ENCODE measurements at regions of chr4 and their contacts with region 1.

Region 1: GRCh38 chr4:2468445-2469192 is at the start of gene RNF4:
- DNase-seq: peak; percentile 94
- H3K4me3 Mint-ChIP-seq: peak within 1 kb of the TSS; percentile 95
- H3K27ac Mint-ChIP-seq: peak within 1 kb of the TSS; percentile 96
- H3K4me1 Mint-ChIP-seq: peaks cover 29% of the 10 kb centered on the region
- H3K27me3 Mint-ChIP-seq: peaks cover 1% of the 10 kb centered on the region
- total RNA-seq, gene RNF4: 93.7 and 112 TPM in 2 replicates

Region 2: DNA sequence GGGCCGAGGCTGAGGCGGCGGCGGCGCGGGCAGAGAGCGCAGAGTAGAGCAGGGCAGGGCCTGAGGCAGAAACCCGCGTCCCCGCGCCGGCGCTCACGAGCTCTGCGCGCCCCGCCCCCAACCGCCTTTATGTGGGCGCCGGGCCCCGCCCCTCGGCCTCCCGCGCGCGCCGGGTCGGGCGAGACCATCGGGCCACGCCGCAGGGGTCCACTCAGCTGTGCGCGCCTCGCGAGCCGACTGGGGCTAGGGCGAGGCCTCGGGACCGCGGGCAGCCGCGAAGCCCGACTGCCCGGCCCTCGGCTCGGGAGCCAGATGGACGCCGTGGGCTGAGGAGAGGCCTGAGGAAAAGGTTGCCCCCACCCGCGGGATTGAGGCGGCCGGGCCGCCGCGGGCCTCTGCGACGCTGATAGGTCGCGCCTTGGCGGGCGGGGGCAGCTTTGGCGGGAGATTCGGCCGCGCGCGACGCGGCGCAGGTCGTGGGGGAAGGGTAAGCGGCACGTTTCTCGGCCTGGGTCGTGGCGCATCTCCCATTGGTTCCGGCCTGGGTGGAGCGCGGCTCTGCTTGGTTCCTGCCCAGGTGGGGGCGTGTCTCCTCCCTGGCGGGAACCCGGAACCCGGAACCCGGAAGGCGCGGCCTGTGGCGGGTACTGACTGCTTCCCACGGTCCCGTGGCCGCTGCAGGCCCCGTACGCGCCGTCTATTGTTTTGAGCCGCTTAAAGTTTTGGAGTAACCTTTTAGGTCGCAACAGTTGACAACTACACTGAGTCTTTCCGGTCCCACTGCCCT is 756.2 kb before region 1 on chr4 and contains the start of gene SLBP:
- intact Hi-C with region 1: loop called (anchors 2 kb)
- DNase-seq: peak; percentile 99
- H3K4me3 Mint-ChIP-seq: peak within 1 kb of the TSS; percentile 99
- H3K27ac Mint-ChIP-seq: peak within 1 kb of the TSS; percentile 89
- H3K4me1 Mint-ChIP-seq: peaks cover 59% of the 10 kb centered on the region
- H3K27me3 Mint-ChIP-seq: no peaks in the 10 kb centered on the region
- total RNA-seq, gene SLBP: 136 and 140 TPM in 2 replicates

Region 3: GRCh38 chr4:2008875-2009703 is 459.5 kb before region 1 on chr4 and contains the start of gene NELFA:
- intact Hi-C with region 1: loop called (anchors 2 kb)
- DNase-seq: peak; percentile 91
- H3K4me3 Mint-ChIP-seq: peak within 1 kb of the TSS; percentile 92
- H3K27ac Mint-ChIP-seq: peak within 1 kb of the TSS; percentile 88
- H3K4me1 Mint-ChIP-seq: peaks cover 31% of the 10 kb centered on the region
- H3K27me3 Mint-ChIP-seq: peaks cover 18% of the 10 kb centered on the region
- total RNA-seq, gene NELFA: 52.9 and 55.4 TPM in 2 replicates

Region 4: DNA sequence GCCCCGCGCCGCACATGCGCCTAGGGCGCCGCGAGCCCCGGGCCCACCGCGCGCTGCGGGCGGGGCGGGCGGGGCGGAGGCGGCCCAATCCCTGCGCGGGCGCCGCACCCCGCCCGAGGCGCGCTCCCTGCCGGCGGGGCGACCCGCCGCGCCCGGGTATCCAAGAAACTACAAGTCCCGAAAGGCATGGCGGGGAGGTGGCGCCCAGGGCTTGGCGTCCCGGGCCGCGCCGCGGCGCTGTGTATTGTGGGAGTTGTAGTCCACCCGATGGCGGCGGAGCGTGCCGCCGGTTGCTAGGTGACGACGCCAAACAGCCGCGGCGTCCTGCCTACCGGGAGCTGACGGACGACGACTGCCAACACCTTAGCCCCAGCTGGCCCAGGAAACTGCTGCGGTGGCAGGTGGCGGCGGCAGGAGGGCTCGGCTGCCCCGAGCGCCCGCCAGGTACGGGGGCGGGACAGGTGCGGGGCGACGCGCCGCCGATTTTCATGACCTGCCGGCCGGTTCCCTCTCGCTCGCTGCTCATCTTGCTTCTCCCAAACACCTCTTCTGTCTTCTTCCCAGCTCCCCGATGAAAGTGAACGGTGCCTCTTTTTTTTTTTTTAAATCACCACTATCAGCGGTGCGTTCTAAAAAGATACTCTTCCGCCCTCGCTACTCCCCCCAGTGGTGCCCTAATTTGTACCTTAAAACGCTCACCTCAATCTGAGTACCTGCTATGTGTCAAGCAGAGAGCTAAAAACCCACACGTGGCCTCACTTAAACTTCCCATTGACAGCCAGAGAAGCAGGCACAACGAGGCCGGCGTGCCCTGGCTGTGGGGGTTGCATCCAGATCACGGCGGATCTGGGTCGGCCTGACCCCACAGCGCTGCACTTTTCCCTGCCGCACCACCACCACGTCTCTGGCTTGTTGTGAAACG is 49.7 kb before region 1 on chr4 and contains the start of gene CFAP99:
- intact Hi-C with region 1: loop called (anchors 1 kb)
- DNase-seq: peak; percentile 94
- H3K4me3 Mint-ChIP-seq: peak within 1 kb of the TSS; percentile 85
- H3K27ac Mint-ChIP-seq: peak within 1 kb of the TSS; percentile 82
- H3K4me1 Mint-ChIP-seq: peaks cover 39% of the 10 kb centered on the region
- H3K27me3 Mint-ChIP-seq: peaks cover 55% of the 10 kb centered on the region
- total RNA-seq, gene CFAP99: not detected in 2 replicates

Region 5: GRCh38 chr4:2457481-2458295 is 10.9 kb before region 1 on chr4:
- intact Hi-C with region 1: no loop called
- DNase-seq: no peak
- H3K4me3 Mint-ChIP-seq: no peak overlapping the region
- H3K27ac Mint-ChIP-seq: no peak overlapping the region
- H3K4me1 Mint-ChIP-seq: peaks cover 4% of the 10 kb centered on the region
- H3K27me3 Mint-ChIP-seq: peaks cover 18% of the 10 kb centered on the region

Region 6: DNA sequence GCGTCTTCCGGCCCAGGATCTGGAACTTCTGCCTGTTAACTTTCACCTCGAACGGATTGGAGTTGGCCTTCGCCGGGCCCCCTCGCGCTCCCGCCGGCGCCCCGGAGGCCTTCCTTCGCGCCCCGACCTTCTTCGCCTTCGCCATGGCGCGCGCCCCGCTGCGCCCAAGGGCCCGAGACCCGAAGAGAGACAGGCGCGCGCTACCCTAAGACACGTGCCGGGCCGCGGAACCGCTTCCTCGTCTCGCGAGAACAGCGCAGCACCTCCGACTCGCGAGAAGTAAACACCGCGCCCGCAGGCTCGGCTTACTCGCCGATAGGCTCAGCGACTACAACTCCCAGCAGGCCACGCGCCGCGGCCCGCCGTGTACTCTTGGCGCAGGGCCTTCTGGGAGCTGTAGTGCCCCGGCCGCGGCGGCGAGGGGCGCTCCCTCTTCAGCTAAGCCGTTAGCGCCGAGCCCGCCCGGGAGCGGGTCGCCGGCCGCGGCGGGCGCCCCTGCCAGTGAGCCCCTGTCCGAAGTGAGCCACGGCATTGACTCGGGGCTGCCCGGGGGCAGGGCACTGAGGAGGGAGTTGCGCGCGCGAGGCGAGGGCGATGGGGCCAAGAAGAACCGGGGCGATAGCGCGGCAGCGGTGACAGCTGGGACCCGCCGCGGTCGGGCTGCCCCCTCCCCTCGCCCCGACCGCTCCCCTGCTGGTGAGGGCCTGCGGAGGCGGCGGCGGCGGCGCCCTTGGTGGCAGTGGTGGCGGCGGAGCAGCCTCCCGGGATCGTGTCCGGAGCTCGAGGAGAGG is 494.8 kb after region 1 on chr4 and contains the starts of genes GRK4 and NOP14:
- intact Hi-C with region 1: loop called (anchors 1 kb)
- DNase-seq: peak; percentile 96
- H3K4me3 Mint-ChIP-seq: peak within 1 kb of the TSS; percentile 97
- H3K27ac Mint-ChIP-seq: peak within 1 kb of the TSS; percentile 92
- H3K4me1 Mint-ChIP-seq: peaks cover 28% of the 10 kb centered on the region
- H3K27me3 Mint-ChIP-seq: no peaks in the 10 kb centered on the region
- total RNA-seq, gene GRK4: 4.4 and 4.5 TPM in 2 replicates
- total RNA-seq, gene NOP14: 140 and 142 TPM in 2 replicates